Cardiac septum (tissue), 1 donor: ENCODE measurements at regions of chr7 and their contacts with region 1.

Region 1: DNA sequence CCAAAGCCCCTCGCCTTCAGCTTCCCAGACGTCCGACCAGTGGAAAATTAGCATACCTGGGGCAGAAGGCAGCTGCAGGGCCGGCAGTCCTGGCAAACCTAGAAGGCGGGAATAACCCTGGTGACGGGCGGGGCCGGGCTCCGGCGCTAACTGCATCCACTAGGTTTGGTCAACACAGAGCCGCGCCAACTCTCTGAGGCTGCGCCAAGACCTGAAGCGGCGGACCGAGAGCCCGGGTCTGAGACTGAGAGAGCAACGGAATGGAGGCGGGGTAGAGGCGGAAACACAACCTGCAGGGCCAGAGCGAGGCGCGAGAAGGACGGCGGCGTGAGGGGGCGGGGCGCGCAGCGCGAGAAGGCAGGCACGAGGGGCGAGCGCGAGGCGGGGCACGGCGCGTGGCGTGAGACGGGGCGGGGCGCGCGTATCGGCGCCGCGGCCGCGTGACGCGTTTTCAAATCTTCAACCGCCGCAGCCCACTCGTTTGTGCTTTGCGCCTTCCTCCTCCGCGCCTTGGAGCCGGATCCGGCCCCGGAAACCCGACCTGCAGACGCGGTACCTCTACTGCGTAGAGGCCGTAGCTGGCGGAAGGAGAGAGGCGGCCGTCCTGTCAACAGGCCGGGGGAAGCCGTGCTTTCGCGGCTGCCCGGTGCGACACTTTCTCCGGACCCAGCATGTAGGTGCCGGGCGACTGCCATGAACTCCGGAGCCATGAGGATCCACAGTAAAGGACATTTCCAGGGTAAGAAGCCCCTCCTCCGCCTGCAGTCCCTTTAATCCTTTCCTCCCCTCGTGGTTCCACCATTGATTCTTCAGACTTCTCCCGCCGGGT is at the starts of genes DBF4 and SLC25A40:
- DNase-seq: peak; percentile 98
- total RNA-seq, gene DBF4: 2.5 TPM
- total RNA-seq, gene SLC25A40: 20.0 TPM

Region 2: GRCh38 chr7:87027900-87028299 is 848.4 kb before region 1 on chr7:
- intact Hi-C with region 1: no loop called
- DNase-seq: no peak

Region 3: DNA sequence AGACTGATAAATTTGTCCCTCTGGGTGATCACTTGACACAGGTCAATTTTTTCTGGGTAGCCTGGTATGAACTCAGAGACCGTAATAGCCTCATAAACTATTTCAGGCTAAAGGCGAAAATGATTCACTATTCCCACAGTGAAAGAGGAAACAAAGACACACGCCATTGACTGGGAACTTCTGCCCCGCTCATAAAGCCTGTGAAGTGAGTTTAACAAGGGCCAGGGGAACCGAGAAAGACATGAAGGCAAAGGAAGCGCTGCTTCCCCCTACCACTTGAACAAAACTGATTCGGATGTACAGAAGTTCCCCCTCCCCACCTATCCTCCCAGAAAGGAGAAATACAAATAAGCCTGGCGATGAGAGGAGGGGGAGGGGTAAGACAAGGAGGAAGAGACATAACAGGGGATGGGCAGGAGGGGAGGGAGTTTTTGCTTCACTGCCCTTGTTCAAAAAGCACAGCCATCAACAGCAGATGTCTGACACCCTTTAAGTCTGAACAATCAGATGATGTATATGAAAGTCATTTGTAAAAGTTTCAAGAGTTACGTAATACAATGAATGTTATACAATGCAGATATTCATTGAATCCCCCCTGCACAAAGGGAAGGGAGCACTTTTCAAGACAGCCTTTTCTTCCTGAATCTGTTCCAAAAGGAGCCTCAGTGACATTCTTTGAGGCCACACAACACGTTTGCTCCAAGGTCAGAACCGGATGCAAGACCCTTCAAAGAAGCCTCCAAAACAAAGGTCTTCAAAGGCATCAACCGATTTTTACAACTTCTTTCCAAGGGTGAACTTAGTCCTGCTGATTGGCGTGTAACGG is 401.5 kb before region 1 on chr7:
- intact Hi-C with region 1: loop called (anchors 10 kb)
- DNase-seq: no peak

Region 4: GRCh38 chr7:87628780-87629569 is 247.3 kb before region 1 on chr7:
- intact Hi-C with region 1: loop called (anchors 2 kb)
- DNase-seq: peak; percentile 75

Region 5: DNA sequence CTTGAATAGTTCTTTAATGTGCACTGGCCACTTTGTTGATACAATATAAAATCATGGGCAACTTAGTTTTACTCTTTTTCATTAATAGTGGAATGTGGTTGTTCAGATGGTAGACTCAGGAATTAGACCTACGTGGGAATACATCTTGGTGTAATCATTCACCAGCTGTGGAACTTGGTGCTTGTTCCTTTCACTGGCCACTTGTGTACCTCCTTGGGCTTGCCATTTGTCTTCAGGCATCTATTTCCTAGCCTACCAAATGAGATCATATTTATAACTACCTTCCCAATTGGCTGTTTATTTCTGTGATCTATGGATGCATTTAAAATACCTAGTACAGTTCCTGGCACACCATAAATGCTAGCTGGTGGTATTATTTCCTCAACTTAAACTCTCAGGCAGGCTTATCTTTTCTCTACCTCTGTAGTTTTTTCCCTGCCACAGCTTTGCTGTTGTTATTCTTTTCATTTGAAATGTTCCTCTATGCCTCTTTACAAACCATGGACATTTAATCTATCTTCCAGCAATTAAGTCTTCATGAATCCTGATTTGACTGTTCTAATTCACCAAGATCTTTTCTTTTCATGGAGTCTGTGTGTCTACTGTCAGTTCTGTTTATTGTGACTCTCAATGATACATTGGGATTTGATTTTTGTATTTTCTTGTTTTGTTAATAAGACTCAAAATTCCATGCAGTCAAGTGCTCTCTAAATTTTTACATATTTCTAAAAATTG is 170.8 kb after region 1 on chr7:
- intact Hi-C with region 1: loop called (anchors 2 kb)
- DNase-seq: no peak

Region 6: GRCh38 chr7:88101769-88102168 is 225.5 kb after region 1 on chr7:
- intact Hi-C with region 1: loop called (anchors 10 kb)
- DNase-seq: no peak